ENCODE measurements at regions of chr19 and their contacts with region 1.

Region 1: GRCh38 chr19:45886427-45887199 is 672 bp upstream of the IRF2BP1 start:
- DNase-seq: peak; percentile 91 to 94
- H3K4me3 ChIP-seq: peak overlapping the region; percentile 75 to 90
- H3K27ac ChIP-seq: peak overlapping the region; percentile 81 to 84
- H3K4me1 ChIP-seq: peaks cover 3 to 45% (median 38%) of the 10 kb centered on the region in 4 donors
- H3K27me3 ChIP-seq: no peaks in the 10 kb centered on the region
- CTCF ChIP-seq: peak in 1 of 2 experiments; percentile 11

Region 2: GRCh38 chr19:45657520-45658167 is 229.0 kb before region 1 on chr19:
- intact Hi-C with region 1: no loop called
- DNase-seq: no peak
- H3K4me3 ChIP-seq: no peak overlapping the region
- H3K27ac ChIP-seq: no peak overlapping the region
- H3K4me1 ChIP-seq: no peaks in the 10 kb centered on the region
- H3K27me3 ChIP-seq: peaks cover 0 to 27% of the 10 kb centered on the region in 2 donors
- CTCF ChIP-seq: no peak

Region 3: GRCh38 chr19:45817010-45817724 is 69.4 kb before region 1 on chr19:
- intact Hi-C with region 1: loop called (anchors 5 kb)
- DNase-seq: peak; percentile 90 to 94
- H3K4me3 ChIP-seq: no peak overlapping the region
- H3K27ac ChIP-seq: no peak overlapping the region
- H3K4me1 ChIP-seq: peaks cover 0 to 25% (median 7%) of the 10 kb centered on the region in 4 donors
- H3K27me3 ChIP-seq: peaks cover 0 to 5% of the 10 kb centered on the region in 2 donors
- CTCF ChIP-seq: peak; percentile 83 to 94

Region 4: DNA sequence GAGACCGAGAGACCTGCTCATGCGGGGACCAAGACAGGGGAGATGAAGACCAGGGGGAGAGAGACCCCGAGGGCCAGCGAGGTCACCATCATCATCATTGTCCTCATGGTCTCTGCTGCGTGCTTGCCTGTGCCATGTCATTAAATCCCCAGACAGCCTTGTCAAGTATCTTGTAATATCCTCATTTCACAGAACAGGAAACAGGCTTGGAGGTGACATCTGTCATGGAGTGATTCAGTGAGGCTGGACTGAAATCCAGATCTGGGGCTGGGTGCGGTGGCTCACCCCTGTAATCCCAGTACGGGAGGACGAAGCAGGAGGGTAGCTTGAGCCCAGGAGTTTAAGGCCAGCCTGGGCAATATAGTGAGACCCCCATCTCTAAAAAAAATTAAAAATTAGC is 33.8 kb after region 1 on chr19:
- intact Hi-C with region 1: loop called (anchors 2 kb)
- DNase-seq: no peak
- H3K4me3 ChIP-seq: no peak overlapping the region
- H3K27ac ChIP-seq: no peak overlapping the region
- H3K4me1 ChIP-seq: no peaks in the 10 kb centered on the region
- H3K27me3 ChIP-seq: peaks cover 0 to 36% of the 10 kb centered on the region in 2 donors
- CTCF ChIP-seq: no peak

Region 5: GRCh38 chr19:46016426-46017094 is 129.9 kb after region 1 on chr19:
- intact Hi-C with region 1: loop called (anchors 10 kb)
- DNase-seq: peak; percentile 68 to 87
- H3K4me3 ChIP-seq: peak overlapping the region; percentile 60 to 69
- H3K27ac ChIP-seq: peak overlapping the region; percentile 31 to 54
- H3K4me1 ChIP-seq: peaks cover 0 to 28% (median 22%) of the 10 kb centered on the region in 4 donors
- H3K27me3 ChIP-seq: peaks cover 0 to 10% of the 10 kb centered on the region in 2 donors
- CTCF ChIP-seq: peak; percentile 57 to 93